ENCODE measurements at regions of chr3 and their contacts with region 1.

Region 1: DNA sequence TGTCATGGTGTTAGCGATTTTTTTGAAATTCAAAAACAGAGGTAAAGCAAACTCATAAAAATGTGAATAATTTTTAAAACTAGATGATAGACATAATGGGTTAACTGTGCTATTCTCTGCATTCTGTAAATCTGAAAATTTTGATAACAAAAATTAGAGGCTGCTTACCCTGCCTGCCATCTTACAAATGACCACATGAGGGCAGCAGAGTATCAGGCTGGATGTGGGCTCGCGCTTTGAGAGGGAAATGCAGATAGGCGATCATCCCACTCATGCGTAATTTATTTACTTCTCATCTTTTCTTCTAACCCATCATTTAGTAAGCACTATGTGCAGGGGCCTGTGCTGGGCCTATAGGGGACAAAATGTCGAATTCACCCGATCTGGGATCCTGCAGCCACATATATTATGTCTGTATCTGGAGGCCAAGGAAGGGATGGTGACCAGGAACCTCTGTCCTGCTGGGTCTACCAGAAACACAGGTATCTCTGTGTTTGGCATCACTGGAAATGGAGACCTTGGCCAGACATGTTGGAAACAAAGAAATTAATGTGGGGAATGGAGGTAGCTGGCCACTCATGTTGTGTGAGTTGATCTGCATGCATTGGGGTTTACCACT is 7.8 kb upstream of the RAD18 start:
- DNase-seq: peak; percentile 77 to 88
- H3K4me3 ChIP-seq: no peak overlapping the region
- H3K27ac ChIP-seq: no peak overlapping the region
- H3K4me1 ChIP-seq: peaks cover 0 to 3% (median 0%) of the 10 kb centered on the region in 4 donors
- H3K27me3 ChIP-seq: peaks cover 0 to 27% (median 0%) of the 10 kb centered on the region in 3 donors
- CTCF ChIP-seq: peak in 5 of 7 experiments; percentile 95 to 98 (median 97)
- EP300 ChIP-seq: no peak
- POLR2A ChIP-seq: no peak

Region 2: DNA sequence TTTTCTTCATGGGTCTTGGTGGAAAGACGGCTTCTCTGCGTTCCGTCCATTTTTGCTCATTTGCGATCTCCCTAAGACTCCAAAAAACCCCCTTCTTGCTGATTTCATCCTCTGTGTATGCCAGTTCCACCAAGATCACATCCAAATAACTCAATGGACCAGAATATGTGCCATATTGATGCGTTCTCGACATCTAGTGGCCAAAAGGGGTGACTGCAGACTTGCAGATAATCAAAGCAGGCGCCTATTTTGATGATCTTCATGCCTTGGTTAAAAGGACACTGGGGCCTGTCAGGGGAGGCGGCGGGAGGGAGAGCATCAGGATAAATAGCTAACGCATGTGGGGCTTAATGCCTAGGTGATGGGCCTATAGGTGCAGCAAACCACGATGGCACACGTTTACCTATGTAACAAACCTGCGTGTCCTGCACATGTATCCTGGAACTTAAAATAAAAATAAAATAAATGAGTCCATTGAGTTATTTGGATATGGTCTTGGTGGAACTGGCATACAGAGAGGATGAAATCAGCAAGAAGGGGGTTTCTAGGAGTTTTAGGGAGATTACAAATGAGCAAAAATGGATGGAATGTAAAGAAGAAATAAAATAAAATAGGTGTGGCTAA is 96.4 kb after region 1 on chr3:
- intact Hi-C with region 1: loop called (anchors 5 kb)
- DNase-seq: peak; percentile 59 to 83
- H3K4me3 ChIP-seq: no peak overlapping the region
- H3K27ac ChIP-seq: no peak overlapping the region
- H3K4me1 ChIP-seq: peaks cover 0 to 4% (median 2%) of the 10 kb centered on the region in 4 donors
- H3K27me3 ChIP-seq: no peaks in the 10 kb centered on the region
- CTCF ChIP-seq: peak in 5 of 7 experiments; percentile 81 to 97 (median 91)
- EP300 ChIP-seq: no peak
- POLR2A ChIP-seq: no peak

Region 3: GRCh38 chr3:9302425-9303181 is 331.5 kb after region 1 on chr3:
- intact Hi-C with region 1: loop called (anchors 5 kb)
- DNase-seq: peak; percentile 83 to 95
- H3K4me3 ChIP-seq: peak overlapping the region in 3 of 4 donors; percentile 1 to 26 (median 22)
- H3K27ac ChIP-seq: no peak overlapping the region
- H3K4me1 ChIP-seq: peaks cover 5 to 9% (median 6%) of the 10 kb centered on the region in 4 donors
- H3K27me3 ChIP-seq: peaks cover 0 to 6% (median 0%) of the 10 kb centered on the region in 3 donors
- CTCF ChIP-seq: peak in 5 of 7 experiments; percentile 78 to 92 (median 86)
- EP300 ChIP-seq: no peak
- POLR2A ChIP-seq: no peak